HAP-1 (cell line): ENCODE measurements at regions of chr2 and their contacts with region 1.

Region 1: DNA sequence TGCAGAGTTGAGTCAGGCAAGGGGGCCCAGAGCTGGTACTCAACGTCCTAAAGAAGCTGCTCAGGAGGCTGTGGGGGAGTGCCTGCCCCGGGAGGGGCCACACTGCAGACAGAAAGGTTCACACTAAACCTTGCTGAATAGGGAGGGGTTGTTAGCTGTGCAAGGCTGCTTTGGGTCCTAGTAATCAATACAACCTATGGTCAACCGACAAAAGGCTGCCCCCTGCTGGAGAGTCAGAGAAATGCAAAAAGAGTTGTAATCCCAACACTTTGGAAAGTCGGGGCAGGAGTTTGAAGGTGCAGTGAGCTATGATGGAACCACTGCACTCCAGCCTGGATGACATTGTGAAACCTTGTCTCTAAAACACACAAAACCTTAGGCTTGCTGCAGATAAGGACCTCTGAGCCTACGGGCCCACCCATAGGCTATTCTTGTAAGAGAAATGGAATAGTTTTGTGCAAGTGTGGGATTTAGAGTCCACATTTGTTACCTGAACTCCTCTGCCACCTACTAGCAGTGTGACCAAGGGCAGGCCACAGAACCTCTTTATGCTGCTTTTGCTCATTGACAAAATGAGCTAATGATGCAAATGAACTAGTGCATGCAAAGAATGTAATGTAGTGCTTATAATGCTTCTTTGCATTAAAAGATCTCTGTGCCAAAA is 81.5 kb downstream of the PRPF40A start:
- DNase-seq: peak; percentile 55 to 82
- H3K4me3 ChIP-seq: no peak overlapping the region
- H3K4me1 ChIP-seq: no peaks in the 10 kb centered on the region
- H3K27me3 ChIP-seq: no peaks in the 10 kb centered on the region

Region 2: DNA sequence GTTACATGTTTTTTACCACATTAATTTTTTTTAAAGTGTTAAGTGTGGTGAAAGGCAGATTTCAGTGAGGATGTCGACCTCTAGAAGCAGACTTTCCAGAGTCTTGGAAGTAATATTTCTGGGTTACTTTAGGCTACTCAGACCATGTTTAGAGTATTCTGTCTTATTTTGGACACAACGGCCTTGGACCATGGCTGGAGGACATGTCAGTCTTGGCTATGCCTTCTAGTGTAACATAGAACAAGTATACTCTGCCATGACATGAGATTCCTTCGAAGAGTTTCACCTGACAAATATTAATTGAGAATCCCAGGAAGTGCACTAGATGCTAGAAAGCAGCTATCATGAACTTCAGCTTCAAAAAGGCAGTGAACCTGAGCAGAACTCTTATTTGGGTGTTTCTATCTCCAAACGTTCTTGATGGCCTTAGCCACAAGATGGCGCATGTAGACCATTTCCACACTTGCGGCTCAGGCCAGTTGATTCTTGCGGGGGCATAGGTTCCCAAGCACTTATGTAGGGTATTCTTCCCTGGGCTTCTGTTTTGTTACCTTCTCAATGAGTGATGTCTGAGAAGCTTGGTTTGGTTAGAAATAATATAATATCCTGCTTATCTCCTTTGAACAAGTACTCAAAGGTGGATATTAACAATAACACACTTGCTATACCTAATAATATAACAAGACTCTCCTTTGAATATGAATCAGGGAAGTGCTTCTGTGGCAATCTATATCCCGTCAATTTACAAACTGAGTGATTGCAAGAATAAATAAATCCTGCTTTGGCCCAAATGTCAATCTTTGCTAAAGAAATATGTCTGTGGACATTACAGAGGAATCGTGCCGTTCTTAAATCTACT is 598.9 kb before region 1 on chr2:
- in situ Hi-C with region 1: loop called (anchors 10 kb)
- DNase-seq: peak; percentile 61 to 79
- H3K4me3 ChIP-seq: no peak overlapping the region
- H3K4me1 ChIP-seq: peaks cover 4% of the 10 kb centered on the region; the same call in 1 of the 2 replicates
- H3K27me3 ChIP-seq: no peaks in the 10 kb centered on the region

Region 3: GRCh38 chr2:152189622-152190495 is 445.9 kb before region 1 on chr2:
- in situ Hi-C with region 1: loop called (anchors 5 kb)
- DNase-seq: peak; percentile 52 to 62
- H3K4me3 ChIP-seq: no peak overlapping the region
- H3K4me1 ChIP-seq: no peaks in the 10 kb centered on the region
- H3K27me3 ChIP-seq: no peaks in the 10 kb centered on the region